Activated CD8-positive, alpha-beta T cell treated with anti-CD3 and anti-CD28 coated beads for 36 hours (primary cell): ENCODE measurements at regions of chr17 and their contacts with region 1.

Region 1: DNA sequence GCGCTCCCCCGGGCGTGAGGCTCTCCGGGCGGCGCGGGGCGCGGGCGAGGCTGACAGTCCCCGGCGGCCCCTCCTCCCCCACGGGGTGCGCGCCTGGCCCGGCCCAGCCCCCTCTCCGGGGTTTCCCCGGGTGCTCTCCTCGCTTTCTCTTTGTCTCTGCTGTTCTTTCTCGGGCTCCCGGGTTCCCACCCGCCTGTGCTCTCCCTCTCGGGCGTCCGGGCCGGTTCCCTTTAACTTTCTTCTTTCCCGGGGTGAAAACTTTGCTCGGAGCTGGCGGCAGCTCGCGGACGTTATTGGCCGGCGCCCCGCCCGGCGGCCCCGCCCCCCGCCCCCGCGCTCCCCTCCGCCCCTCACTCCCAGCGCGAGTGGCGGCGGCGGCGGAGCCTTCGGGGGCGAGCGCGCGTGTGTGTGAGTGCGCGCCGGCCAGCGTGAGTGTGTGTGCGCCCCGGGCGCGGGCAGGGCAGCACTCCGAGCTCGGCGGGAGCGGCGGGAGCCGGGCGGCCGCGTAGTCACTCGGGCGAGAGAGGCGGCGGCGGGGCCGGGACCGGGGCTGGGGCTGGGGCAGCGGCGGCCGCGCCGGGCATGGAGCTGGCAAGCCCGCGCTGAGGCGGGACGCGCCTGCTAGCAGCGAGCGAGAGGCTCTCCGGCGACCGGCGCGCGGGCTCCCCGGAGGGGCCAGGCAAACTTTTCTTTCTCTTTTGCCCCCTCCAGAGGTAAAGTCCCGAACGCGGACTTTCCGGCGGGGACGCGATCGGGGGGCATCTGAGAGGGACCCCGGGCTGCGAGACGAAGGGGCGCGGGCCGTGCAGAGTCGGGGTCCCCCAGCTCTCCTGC is at the start of gene NTN1:
- DNase-seq: peak; percentile 72
- ATAC-seq: peak; percentile 82
- H3K4me3 Mint-ChIP-seq: peak within 1 kb of the TSS; percentile 79
- H3K27ac Mint-ChIP-seq: no peak within 1 kb of the TSS
- H3K4me1 Mint-ChIP-seq: peaks cover 7% of the 10 kb centered on the region
- H3K27me3 Mint-ChIP-seq: peaks cover 51% of the 10 kb centered on the region
- CTCF ChIP-seq: no peak
- total RNA-seq, gene NTN1: 1.2 to 1.3 TPM

Region 2: DNA sequence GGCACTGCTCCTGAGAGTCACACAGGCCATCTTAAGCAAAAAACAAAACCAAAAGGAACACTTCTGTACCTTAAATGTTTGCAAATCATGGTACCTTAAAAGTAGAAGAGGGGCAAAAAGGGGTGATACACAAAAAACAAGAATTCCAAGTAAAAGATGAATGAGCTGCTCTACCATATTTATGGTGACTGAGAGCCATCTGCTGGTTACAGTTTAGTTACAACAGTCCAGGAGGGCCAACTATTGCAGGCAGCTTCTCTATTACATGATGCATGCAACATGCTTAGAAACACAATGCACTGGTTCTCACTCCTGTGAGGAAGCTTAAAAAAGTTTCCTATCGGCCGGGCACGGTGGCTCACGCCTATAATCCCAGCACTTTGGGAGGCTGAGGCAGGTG is 500.7 kb after region 1 on chr17:
- CTCF ChIA-PET with region 1: no interaction called
- POLR2A ChIA-PET with region 1: no interaction called
- intact Hi-C with region 1: loop called (anchors 10 kb)
- DNase-seq: peak; percentile 12
- ATAC-seq: peak; percentile 49
- H3K4me3 Mint-ChIP-seq: no peak overlapping the region
- H3K27ac Mint-ChIP-seq: no peak overlapping the region
- H3K4me1 Mint-ChIP-seq: peaks cover 13% of the 10 kb centered on the region
- H3K27me3 Mint-ChIP-seq: no peaks in the 10 kb centered on the region
- CTCF ChIP-seq: peak; percentile 39

Region 3: DNA sequence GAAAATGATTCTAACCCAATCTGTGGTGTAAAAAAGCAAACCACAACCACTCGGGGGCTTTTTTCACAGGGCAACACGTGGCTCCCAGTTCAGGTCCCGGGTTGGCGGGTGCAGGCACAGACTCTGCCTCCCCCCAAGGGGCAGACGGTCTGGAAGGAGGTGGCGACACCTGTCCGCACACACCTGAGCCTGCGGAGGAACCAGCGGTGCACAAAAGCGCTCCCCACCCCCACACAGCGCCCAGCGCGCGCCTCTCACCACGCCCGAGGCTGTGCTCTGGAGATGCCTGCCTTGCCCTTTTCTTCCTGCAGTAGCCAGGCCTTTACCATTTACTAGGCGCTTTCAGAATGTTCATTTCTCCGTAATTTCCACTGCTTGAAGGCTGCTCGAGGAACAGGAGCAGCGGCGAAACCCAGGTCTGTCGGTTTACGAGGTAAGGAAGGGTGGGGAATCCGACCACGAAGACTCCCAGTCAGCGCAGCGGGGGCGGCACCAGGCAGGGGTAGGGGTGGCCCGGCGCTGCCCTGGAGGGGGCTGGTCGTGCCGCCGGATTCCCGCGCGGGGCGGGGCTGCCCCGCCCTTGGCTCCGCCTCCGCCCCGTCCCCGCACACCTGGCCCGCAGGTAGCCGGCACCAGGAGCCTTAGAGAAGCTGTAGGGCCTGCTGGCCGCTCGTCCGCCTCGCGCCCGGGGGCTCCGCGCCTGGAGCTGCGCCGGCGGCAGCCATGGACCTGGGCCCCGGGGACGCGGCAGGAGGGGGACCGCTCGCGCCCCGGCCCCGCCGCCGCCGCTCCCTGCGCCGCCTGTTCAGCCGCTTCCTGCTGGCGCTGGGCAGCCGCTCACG is 623.8 kb after region 1 on chr17 and contains the start of gene USP43:
- CTCF ChIA-PET with region 1: no interaction called
- POLR2A ChIA-PET with region 1: no interaction called
- intact Hi-C with region 1: loop called (anchors 10 kb)
- DNase-seq: peak; percentile 66
- ATAC-seq: peak; percentile 73
- H3K4me3 Mint-ChIP-seq: peak within 1 kb of the TSS; percentile 78
- H3K27ac Mint-ChIP-seq: no peak within 1 kb of the TSS
- H3K4me1 Mint-ChIP-seq: peaks cover 19% of the 10 kb centered on the region
- H3K27me3 Mint-ChIP-seq: peaks cover 41% of the 10 kb centered on the region
- CTCF ChIP-seq: no peak
- total RNA-seq, gene USP43: 0.38 to 0.43 TPM